ENCODE measurements at regions of chr18 and their contacts with region 1.

Region 1: GRCh38 chr18:12921178-12921577 is 26.6 kb upstream of the SEH1L start:
- DNase-seq: no peak
- ATAC-seq: no peak
- H3K4me3 ChIP-seq: no peak overlapping the region
- H3K27ac ChIP-seq: no peak overlapping the region
- H3K4me1 ChIP-seq: no peaks in the 10 kb centered on the region
- H3K27me3 ChIP-seq: no peaks in the 10 kb centered on the region
- CTCF ChIP-seq: no peak

Region 2: DNA sequence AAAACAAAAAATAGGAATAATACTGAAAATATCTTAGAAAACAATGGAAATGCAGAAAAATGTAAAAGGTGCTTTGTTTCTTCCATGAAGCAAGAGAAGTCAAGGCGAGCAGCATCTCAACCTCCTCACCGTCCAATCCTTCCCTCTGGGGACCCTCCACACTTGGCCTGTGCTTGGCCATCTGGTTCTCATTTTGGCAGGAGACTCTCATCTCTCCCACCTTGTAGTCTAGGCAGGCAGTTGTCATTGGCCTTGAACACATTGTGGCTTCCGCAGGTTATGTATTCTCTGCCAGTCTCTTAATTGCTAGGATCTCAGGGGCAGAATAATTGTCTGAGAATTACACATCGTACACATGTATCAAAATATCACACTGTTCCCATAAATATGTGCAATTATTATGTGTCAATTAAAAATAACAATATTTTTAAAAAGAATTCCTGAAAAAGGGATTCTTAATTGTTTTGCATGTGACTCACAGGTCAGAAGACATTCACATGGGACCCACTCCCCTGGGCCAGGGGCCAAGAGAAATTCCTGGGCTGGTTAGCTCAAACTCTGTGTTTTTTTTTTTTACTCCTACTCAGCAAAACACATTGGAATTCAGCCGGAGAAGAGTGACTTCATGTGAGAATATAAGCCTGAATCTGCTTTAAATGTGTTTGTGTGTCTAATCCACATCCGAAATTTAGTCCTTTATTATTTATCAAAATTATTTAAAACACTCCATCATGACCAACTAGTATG is 841.5 kb before region 1 on chr18:
- CTCF ChIA-PET with region 1: no interaction called
- POLR2A ChIA-PET with region 1: no interaction called
- in situ Hi-C with region 1: no loop called
- intact Hi-C with region 1: no loop called
- DNase-seq: no peak
- ATAC-seq: no peak
- H3K4me3 ChIP-seq: no peak overlapping the region
- H3K27ac ChIP-seq: no peak overlapping the region
- H3K4me1 ChIP-seq: no peaks in the 10 kb centered on the region
- H3K27me3 ChIP-seq: peaks cover 4% of the 10 kb centered on the region; the same call in 1 of the 2 replicates
- CTCF ChIP-seq: no peak

Region 3: DNA sequence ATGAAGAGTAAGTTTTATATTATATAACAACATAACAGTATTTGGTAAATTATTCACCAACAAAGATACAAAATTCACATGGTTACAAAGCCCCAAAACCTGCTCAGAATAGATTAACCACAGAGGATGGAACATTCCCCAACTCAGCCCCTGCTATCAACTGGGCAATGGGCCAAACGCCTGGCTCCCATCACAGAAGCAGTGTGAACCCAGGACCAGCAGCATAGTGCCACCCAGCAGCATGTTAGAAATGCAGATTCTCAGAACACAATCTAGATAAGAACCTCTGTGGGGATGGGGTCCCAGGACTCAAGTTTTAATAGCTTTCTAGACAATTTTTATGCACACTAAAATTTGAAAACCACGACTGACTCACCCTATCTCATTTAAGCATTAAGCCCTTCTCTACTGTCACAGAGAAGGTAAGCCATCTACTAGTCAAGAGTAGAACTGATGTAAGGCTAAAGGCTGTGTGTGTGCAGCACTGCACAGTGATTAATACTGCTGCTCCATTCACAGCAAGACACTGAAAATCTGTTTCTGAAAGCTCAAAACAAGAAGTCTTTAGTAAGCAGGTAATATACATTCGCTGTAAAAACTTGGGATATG is 559.3 kb before region 1 on chr18:
- CTCF ChIA-PET with region 1: interaction called, 10 read pairs
- POLR2A ChIA-PET with region 1: no interaction called
- in situ Hi-C with region 1: no loop called
- intact Hi-C with region 1: no loop called
- DNase-seq: no peak
- ATAC-seq: no peak
- H3K4me3 ChIP-seq: no peak overlapping the region
- H3K27ac ChIP-seq: no peak overlapping the region
- H3K4me1 ChIP-seq: no peaks in the 10 kb centered on the region
- H3K27me3 ChIP-seq: no peaks in the 10 kb centered on the region
- CTCF ChIP-seq: no peak

Region 4: GRCh38 chr18:12701161-12701560 is 220.0 kb before region 1 on chr18:
- CTCF ChIA-PET with region 1: no interaction called
- POLR2A ChIA-PET with region 1: interaction called, 11 read pairs
- in situ Hi-C with region 1: no loop called
- intact Hi-C with region 1: no loop called
- DNase-seq: no peak
- ATAC-seq: no peak
- H3K4me3 ChIP-seq: peak overlapping the region; percentile 96 to 97
- H3K27ac ChIP-seq: peak overlapping the region; percentile 99
- H3K4me1 ChIP-seq: peaks cover 18% of the 10 kb centered on the region
- H3K27me3 ChIP-seq: no peaks in the 10 kb centered on the region
- CTCF ChIP-seq: no peak

Region 5: DNA sequence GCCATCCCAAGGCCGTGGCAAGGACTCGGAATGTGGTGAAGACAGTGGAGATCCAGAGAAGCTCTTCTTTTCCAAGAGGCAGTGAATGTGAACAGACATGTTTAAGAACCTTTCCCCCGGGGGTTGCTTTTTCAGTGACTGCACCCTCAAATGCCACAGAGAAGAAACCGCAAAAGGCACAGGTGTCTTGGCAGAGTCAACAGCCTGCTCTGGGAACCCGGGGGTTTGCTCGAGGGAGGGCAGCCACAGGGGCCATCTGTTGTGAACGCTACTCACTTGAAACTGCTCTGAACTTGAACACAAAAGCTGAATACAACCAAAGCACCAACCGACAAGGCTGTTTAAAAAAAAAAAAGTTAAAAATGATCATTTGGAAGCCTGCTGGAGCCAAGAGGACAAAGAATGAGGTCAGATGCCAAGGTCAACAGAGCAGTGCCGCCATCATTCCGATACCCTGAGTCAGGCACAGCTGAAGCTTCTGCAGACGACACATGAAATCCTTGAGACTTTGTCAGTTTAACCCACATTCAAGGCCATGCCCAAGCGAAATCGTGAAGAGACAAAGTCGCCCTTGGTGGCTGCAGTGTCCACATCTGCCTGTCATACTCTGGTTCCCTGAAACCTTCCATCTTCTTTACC is 171.0 kb before region 1 on chr18:
- CTCF ChIA-PET with region 1: no interaction called
- POLR2A ChIA-PET with region 1: no interaction called
- in situ Hi-C with region 1: no loop called
- intact Hi-C with region 1: no loop called
- DNase-seq: no peak
- ATAC-seq: peak; percentile 39
- H3K4me3 ChIP-seq: no peak overlapping the region
- H3K27ac ChIP-seq: no peak overlapping the region
- H3K4me1 ChIP-seq: peaks cover 4% of the 10 kb centered on the region; the same call in 1 of the 2 replicates
- H3K27me3 ChIP-seq: no peaks in the 10 kb centered on the region
- CTCF ChIP-seq: no peak

Region 6: DNA sequence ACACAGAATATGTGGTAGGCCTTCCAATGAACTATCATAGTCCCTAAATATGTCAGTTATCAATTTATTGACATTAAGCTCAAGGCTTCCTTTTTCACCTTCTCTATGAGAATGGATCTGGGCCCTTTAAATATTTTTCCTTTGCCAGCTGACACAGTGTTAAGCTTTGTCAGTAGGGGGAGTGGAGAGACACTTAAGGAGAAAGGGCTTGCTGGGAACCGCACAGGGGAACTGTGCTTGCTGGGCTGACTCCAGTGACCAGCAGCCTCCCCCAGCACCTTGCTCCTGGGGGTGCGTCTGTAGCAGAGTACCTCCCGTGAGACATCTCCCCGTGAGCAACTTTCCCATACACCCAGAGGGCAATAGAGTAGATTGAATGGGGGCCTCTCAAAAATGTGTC is 30.7 kb before region 1 on chr18:
- CTCF ChIA-PET with region 1: no interaction called
- POLR2A ChIA-PET with region 1: no interaction called
- in situ Hi-C with region 1: no loop called
- intact Hi-C with region 1: no loop called
- DNase-seq: no peak
- ATAC-seq: peak; percentile 75; the same call in 1 of the 2 replicates
- H3K4me3 ChIP-seq: no peak overlapping the region
- H3K27ac ChIP-seq: no peak overlapping the region
- H3K4me1 ChIP-seq: no peaks in the 10 kb centered on the region
- H3K27me3 ChIP-seq: no peaks in the 10 kb centered on the region
- CTCF ChIP-seq: peak; percentile 25

Region 7: DNA sequence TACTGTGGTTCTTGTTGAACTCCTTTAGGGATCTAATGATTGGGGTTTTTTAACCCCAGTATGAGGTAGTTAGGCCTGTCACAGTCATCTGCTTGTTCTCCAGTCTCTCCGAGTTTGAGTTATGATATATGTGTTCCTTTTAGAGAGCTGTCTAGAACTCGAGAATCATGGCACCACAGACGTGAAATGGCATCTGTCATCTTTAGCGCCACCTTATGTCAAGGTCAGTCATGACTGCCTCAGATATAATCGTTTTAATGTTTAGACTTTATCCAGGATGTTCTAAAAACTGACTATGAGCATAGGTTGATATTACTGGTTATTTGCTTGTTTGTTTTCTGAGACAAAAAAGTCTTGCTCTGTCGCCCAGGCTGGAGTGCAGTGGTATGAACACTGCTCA is 182.2 kb after region 1 on chr18:
- CTCF ChIA-PET with region 1: no interaction called
- POLR2A ChIA-PET with region 1: no interaction called
- in situ Hi-C with region 1: no loop called
- intact Hi-C with region 1: no loop called
- DNase-seq: no peak
- ATAC-seq: no peak
- H3K4me3 ChIP-seq: no peak overlapping the region
- H3K27ac ChIP-seq: no peak overlapping the region
- H3K4me1 ChIP-seq: no peaks in the 10 kb centered on the region
- H3K27me3 ChIP-seq: no peaks in the 10 kb centered on the region
- CTCF ChIP-seq: peak; percentile 64